ENCODE measurements at regions of chr1 and their contacts with region 1.

Region 1: GRCh38 chr1:197868751-197869489 is 33.5 kb upstream of the C1orf53 start:
- DNase-seq: no peak
- ATAC-seq: peak; percentile 83 to 85
- H3K4me3 ChIP-seq: no peak overlapping the region
- H3K27ac ChIP-seq: no peak overlapping the region
- H3K4me1 ChIP-seq: no peaks in the 10 kb centered on the region
- H3K27me3 ChIP-seq: no peaks in the 10 kb centered on the region
- CTCF ChIP-seq: peak in 4 of 5 experiments; percentile 35 to 55 (median 40)
- POLR2A ChIP-seq: no peak

Region 2: GRCh38 chr1:197614916-197615692 is 253.8 kb before region 1 on chr1:
- in situ Hi-C with region 1: loop called in 3 of 4 experiments (anchors 10 kb)
- intact Hi-C with region 1: loop called (anchors 1 kb)
- DNase-seq: no peak
- ATAC-seq: peak; percentile 52 to 69
- H3K4me3 ChIP-seq: no peak overlapping the region
- H3K27ac ChIP-seq: no peak overlapping the region
- H3K4me1 ChIP-seq: peaks cover 8 to 20% of the 10 kb centered on the region in 2 donors
- H3K27me3 ChIP-seq: no peaks in the 10 kb centered on the region
- CTCF ChIP-seq: peak; percentile 10 to 61 (median 44)
- POLR2A ChIP-seq: no peak

Region 3: DNA sequence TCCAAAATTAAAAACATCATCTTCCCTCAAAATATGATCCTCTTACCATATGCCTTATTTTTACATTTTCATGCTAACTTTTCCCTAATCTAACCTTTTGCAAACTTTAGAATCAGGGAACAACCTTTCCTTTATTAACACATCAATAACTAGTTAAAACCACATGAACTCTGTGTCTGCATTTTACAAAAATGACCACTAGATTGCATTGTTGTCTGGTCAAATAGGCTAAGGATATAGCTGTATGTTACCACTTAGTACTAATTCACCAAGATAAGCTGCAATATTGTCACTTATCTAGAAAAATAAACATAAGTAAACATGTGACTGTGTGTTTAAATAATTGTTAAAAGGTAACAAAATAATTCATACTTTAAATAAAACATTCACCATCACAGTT is 176.0 kb before region 1 on chr1:
- in situ Hi-C with region 1: no loop called
- intact Hi-C with region 1: loop called (anchors 10 kb)
- DNase-seq: no peak
- ATAC-seq: no peak
- H3K4me3 ChIP-seq: no peak overlapping the region
- H3K27ac ChIP-seq: no peak overlapping the region
- H3K4me1 ChIP-seq: peaks cover 4 to 6% of the 10 kb centered on the region in 2 donors
- H3K27me3 ChIP-seq: no peaks in the 10 kb centered on the region
- CTCF ChIP-seq: no peak
- POLR2A ChIP-seq: no peak

Region 4: DNA sequence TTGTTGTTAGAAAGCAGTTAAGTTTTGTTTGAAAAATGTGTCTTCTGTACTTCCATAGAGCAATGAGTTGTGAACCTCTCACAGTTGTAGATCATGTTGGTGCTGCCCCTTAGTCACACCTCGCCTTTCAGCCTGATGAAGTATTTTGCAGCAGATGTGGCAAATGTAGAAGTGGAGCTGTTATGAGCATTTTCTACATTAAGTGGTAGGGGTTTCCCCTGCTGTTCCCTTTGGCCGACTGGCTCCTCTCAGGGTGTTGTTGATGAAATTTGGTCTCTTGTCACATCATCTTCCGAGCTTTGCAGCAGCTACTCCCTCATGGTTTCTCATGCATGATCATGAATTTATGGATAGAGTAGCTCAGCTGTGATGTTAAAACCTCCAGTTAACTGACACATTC is 60.0 kb before region 1 on chr1:
- in situ Hi-C with region 1: no loop called
- intact Hi-C with region 1: no loop called
- DNase-seq: no peak
- ATAC-seq: no peak
- H3K4me3 ChIP-seq: no peak overlapping the region
- H3K27ac ChIP-seq: no peak overlapping the region
- H3K4me1 ChIP-seq: no peaks in the 10 kb centered on the region
- H3K27me3 ChIP-seq: no peaks in the 10 kb centered on the region
- CTCF ChIP-seq: no peak
- POLR2A ChIP-seq: no peak

Region 5: GRCh38 chr1:197825541-197825940 is 43.4 kb before region 1 on chr1:
- in situ Hi-C with region 1: no loop called
- intact Hi-C with region 1: no loop called
- DNase-seq: no peak
- ATAC-seq: no peak
- H3K4me3 ChIP-seq: no peak overlapping the region
- H3K27ac ChIP-seq: no peak overlapping the region
- H3K4me1 ChIP-seq: no peaks in the 10 kb centered on the region
- H3K27me3 ChIP-seq: no peaks in the 10 kb centered on the region
- CTCF ChIP-seq: no peak
- POLR2A ChIP-seq: no peak

Measured in gastrocnemius medialis (tissue), 4 donors.